Aorta (tissue), 5 donors: ENCODE measurements at regions of chr4 and their contacts with region 1.

Region 1: DNA sequence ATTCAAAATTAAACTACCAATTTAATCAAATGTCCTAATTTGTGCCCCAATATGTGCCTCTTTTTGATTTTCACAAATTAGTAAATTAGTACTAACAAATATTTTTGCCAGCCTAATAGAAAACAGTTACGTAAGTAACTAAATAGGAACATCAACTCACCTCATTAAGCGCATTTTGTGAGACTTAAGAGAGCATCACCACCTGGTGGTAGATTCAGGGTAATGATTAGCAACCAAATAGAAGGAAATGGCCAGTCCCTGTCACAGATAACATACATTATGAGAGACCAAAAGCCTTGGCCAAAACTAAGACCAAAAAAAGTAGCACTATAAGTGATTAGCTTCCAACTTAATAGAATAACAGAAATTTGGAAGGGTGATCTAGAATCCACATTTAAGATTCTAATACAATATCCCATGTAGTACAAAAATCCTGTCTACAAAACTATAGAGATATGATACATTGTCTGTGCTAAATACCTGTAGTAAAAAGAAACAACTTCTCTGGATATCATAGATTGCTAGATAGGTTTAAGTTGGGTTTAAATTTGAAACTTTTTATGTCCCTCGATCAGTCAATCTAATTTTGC is 46.7 kb downstream of the C4orf46 start:
- DNase-seq: no peak
- ATAC-seq: peak; percentile 85
- H3K4me3 ChIP-seq: peak overlapping the region in 1 of 2 donors; percentile 34
- H3K27ac ChIP-seq: no peak overlapping the region
- H3K4me1 ChIP-seq: no peaks in the 10 kb centered on the region
- H3K27me3 ChIP-seq: no peaks in the 10 kb centered on the region

Region 2: GRCh38 chr4:158259955-158260575 is 364.9 kb before region 1 on chr4:
- intact Hi-C with region 1: loop called (anchors 1 to 2 kb)
- DNase-seq: no peak
- ATAC-seq: no peak
- H3K4me3 ChIP-seq: peak overlapping the region in 1 of 2 donors; percentile 34
- H3K27ac ChIP-seq: no peak overlapping the region
- H3K4me1 ChIP-seq: no peaks in the 10 kb centered on the region
- H3K27me3 ChIP-seq: no peaks in the 10 kb centered on the region

Region 3: DNA sequence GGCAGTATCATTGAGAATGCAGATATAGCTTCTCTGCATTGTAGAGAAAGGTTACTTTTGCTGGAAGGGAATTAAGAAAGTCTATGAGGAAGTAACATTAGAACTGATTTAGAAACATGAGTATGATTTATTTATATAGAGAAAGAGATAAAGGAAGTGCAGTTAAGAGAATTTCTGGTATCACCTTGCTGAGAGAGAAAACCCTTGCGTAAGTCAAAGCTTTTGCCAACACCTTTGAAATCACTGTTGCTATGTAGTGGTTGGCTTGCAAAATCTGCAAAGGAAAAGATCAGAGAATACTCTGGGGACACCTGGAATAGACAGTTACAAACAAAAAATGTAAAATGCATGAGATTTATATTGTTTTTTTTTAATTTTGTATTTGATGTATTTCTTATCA is 240.6 kb before region 1 on chr4:
- intact Hi-C with region 1: no loop called
- DNase-seq: no peak
- ATAC-seq: no peak
- H3K4me3 ChIP-seq: no peak overlapping the region
- H3K27ac ChIP-seq: no peak overlapping the region
- H3K4me1 ChIP-seq: no peaks in the 10 kb centered on the region
- H3K27me3 ChIP-seq: no peaks in the 10 kb centered on the region

Region 4: GRCh38 chr4:159150821-159151390 is 525.9 kb after region 1 on chr4:
- intact Hi-C with region 1: no loop called
- DNase-seq: no peak
- ATAC-seq: no peak
- H3K4me3 ChIP-seq: no peak overlapping the region
- H3K27ac ChIP-seq: no peak overlapping the region
- H3K4me1 ChIP-seq: peaks cover 0 to 2% of the 10 kb centered on the region in 2 donors
- H3K27me3 ChIP-seq: no peaks in the 10 kb centered on the region